Dorsolateral prefrontal cortex (tissue), 120 donors: ENCODE measurements at regions of chr2 and their contacts with region 1.

Region 1: DNA sequence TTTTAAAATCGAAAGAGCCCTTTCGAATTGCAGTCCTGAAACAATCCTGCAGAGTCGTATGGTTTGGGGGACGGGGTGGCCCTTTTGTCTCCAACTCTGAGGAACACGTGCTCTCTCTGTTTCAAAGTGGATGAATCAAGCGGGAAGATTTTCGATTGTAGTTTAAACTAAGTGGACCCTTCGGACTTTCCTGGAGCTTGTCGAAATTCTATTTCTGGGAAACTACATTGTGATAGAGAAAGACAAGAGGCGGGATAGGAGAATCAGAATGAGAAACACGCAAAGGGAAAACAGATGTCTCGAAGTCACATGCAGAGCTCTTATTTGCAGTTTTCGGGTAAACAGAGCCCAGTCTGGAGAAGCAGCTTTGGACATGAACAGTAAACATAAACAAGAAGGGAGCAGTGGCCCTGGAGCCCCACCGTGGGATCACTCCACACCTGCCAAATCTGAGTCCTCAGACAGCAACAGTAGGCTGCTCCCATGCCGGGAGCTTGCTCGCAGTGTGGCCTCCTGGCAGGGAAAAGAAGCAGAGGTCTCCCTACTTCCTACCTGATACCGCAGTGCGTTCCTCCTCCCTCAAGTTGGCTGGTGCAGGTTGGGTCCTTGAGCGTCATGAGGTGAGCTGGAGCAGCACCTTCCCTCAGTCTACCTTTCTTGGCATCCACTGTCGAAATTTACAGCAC is 202.4 kb downstream of the SLC4A3 start:
- DNase-seq: no peak
- H3K4me3 ChIP-seq: peak overlapping the region in 1 of 59 donors; percentile 25
- H3K27ac ChIP-seq: peak overlapping the region in 23 of 59 donors; percentile 0 to 76 (median 41)
- H3K27me3 ChIP-seq: no peaks in the 10 kb centered on the region
- CTCF ChIP-seq: no peak

Region 2: GRCh38 chr2:219642465-219643080 is 187.2 kb before region 1 on chr2:
- intact Hi-C with region 1: no loop called
- DNase-seq: peak; percentile 89 to 98 (median 96)
- H3K4me3 ChIP-seq: peak overlapping the region in 6 of 59 donors; percentile 9 to 25 (median 12)
- H3K27ac ChIP-seq: peak overlapping the region in 15 of 59 donors; percentile 5 to 63 (median 38)
- H3K27me3 ChIP-seq: peaks cover 0 to under 1% (median 0%) of the 10 kb centered on the region in 45 donors
- CTCF ChIP-seq: peak; percentile 77 to 99 (median 97)

Region 3: GRCh38 chr2:219701847-219702634 is 127.8 kb before region 1 on chr2:
- intact Hi-C with region 1: no loop called
- DNase-seq: peak in 2 of 10 donors; percentile 14 to 37
- H3K4me3 ChIP-seq: no peak overlapping the region
- H3K27ac ChIP-seq: no peak overlapping the region
- H3K27me3 ChIP-seq: peaks cover 0 to 20% (median 0%) of the 10 kb centered on the region in 45 donors
- CTCF ChIP-seq: no peak

Region 4: DNA sequence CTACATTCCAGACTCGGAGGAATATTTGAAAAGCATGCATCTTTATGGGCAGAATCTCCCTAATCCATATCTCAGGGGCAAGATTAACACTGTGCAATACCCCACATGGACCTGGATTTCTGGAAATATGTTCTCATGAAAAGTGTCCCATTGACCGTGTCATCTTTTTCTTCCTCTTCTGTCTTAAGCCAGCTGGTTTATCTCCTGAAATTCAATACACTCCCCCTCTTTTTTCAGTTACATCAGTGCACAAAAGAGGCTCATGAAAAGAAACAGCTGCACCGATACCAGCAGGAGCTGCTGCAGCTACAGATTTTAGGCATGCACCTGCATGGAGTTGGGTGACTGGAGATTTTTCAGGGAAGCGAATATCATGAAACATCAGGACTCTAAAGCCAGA is 85.2 kb before region 1 on chr2:
- intact Hi-C with region 1: loop called in 1 of 2 experiments (anchors 10 kb)
- DNase-seq: peak in 2 of 10 donors; percentile 35 to 37
- H3K4me3 ChIP-seq: no peak overlapping the region
- H3K27ac ChIP-seq: peak overlapping the region in 46 of 59 donors; percentile 4 to 79 (median 59)
- H3K27me3 ChIP-seq: peaks cover 0 to 16% (median 0%) of the 10 kb centered on the region in 45 donors
- CTCF ChIP-seq: peak in 1 of 56 donors; percentile 16